Endothelial cell of umbilical vein (primary cell): ENCODE measurements at regions of chr3 and their contacts with region 1.

Region 1: GRCh38 chr3:179653096-179653797 is 407 bp downstream of the USP13 start:
- DNase-seq: peak; percentile 80
- H3K4me3 ChIP-seq: peak overlapping the region; percentile 34 to 86 (median 81)
- H3K27ac ChIP-seq: peak overlapping the region; percentile 80
- H3K4me1 ChIP-seq: peaks cover 13% of the 10 kb centered on the region
- H3K27me3 ChIP-seq: no peaks in the 10 kb centered on the region
- CTCF ChIP-seq: no peak
- POLR2A ChIP-seq: no peak

Region 2: DNA sequence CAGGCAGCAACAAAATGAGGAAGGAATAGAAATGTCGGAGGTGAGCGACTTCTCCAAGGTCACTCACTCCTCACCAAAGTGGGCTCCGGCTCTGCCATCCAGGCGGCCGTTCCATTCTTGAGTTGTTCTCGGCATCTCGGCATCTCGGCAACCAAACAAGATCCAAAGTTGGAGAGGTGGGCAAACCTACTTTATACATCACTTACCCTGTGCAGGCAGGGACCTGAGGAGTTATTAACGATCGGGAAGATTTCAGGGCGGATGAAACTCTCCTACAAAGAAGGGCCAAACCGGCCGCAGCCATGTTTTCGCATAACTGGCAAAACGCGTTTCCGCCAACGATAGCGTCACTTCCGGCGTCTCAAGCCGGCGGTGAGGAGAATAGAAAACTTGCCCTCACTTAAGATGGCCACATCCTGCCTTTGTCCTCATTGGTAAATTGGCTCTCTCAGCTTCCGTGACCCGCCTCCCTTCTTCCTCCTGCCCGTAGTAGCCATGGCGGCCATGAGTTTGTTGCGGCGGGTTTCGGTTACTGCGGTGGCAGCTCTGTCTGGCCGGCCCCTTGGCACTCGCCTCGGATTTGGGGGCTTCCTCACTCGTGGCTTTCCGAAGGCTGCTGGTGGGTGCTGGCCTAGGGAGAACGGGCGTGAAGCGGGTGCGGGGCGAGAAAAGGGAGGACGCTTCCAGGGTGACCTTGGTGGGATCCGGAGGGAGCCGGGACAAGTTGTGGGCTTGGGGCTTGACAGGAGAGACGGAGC is 48.7 kb before region 1 on chr3 and contains the starts of genes MRPL47 and NDUFB5:
- CTCF ChIA-PET with region 1: interaction called, 8 read pairs
- POLR2A ChIA-PET with region 1: no interaction called
- dilution Hi-C with region 1: no loop called
- intact Hi-C with region 1: loop called (anchors 2 kb)
- DNase-seq: peak; percentile 97
- H3K4me3 ChIP-seq: peak within 1 kb of the TSS; percentile 59 to 94 (median 77)
- H3K27ac ChIP-seq: peak within 1 kb of the TSS; percentile 84
- H3K4me1 ChIP-seq: peaks cover 14% of the 10 kb centered on the region
- H3K27me3 ChIP-seq: no peaks in the 10 kb centered on the region
- CTCF ChIP-seq: no peak
- POLR2A ChIP-seq: peak; percentile 94
- total RNA-seq, gene MRPL47: 47.0 and 51.2 TPM in 2 replicates
- total RNA-seq, gene NDUFB5: 68.3 and 74.9 TPM in 2 replicates

Region 3: GRCh38 chr3:179613807-179614206 is 39.4 kb before region 1 on chr3:
- CTCF ChIA-PET with region 1: interaction called, 23 read pairs
- POLR2A ChIA-PET with region 1: no interaction called
- dilution Hi-C with region 1: no loop called
- intact Hi-C with region 1: loop called (anchors 2 kb)
- DNase-seq: peak; percentile 83
- H3K4me3 ChIP-seq: peak overlapping the region in 1 of 3 experiments; percentile 35
- H3K27ac ChIP-seq: peak overlapping the region; percentile 89
- H3K4me1 ChIP-seq: peaks cover 35% of the 10 kb centered on the region
- H3K27me3 ChIP-seq: no peaks in the 10 kb centered on the region
- CTCF ChIP-seq: no peak
- POLR2A ChIP-seq: no peak

Region 4: DNA sequence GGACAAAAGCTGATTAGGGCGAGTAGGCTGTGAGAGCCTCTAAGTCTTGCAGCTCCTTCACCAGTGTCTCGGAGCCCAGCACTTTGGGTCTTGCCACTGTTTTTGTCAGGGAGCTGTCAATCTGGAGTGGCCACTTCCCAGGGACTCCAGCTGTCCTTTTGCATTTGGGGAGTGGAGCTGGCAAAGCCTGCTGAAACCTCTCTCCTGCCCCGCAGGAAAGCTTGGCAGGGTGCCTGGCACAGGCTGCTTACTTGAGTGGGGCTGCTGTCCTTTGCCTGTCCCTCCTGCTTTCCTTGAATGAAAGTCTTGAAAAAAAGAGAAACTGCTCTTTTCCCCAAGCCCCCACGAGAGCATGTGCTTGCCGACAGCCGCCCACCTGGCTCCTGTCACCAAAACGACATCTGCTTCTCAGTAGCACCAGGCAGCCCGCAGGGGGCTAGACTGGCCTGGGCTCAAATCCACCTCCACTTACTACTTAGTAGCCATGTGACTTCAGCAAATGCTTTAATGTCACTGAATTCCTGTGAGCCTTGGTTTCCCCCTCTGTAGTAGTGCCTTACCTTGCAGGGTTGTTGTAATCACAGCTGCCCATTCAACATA is 13.3 kb after region 1 on chr3:
- CTCF ChIA-PET with region 1: interaction called, 18 read pairs
- POLR2A ChIA-PET with region 1: interaction called, 5 read pairs
- dilution Hi-C with region 1: no loop called
- intact Hi-C with region 1: loop called (anchors 1 kb)
- DNase-seq: peak; percentile 27
- H3K4me3 ChIP-seq: no peak overlapping the region
- H3K27ac ChIP-seq: no peak overlapping the region
- H3K4me1 ChIP-seq: peaks cover 14% of the 10 kb centered on the region
- H3K27me3 ChIP-seq: no peaks in the 10 kb centered on the region
- CTCF ChIP-seq: no peak
- POLR2A ChIP-seq: no peak

Region 5: DNA sequence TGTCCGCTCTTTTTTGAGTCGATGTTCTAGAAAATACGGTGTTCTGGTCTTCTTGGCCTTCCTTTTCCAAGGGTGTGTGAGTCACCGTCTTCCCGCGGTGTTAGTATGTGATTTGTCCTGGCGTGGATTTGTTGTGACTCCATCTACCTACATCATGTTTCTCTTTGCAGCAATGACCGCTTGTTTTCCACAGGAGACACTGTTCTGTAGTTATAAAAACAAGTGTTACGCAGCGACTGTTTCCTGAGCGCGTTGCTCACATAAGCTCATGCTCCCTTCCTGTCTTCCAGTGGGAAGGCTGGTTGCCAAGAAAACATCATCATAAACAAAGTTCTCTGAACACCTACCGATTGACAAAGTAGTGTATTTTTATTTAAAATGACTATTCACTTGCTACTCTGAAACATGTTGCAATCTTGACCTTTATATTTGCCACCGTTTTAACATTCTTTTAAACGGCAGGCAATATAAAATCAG is 18.5 kb after region 1 on chr3:
- CTCF ChIA-PET with region 1: interaction called, 18 read pairs
- POLR2A ChIA-PET with region 1: interaction called, 5 read pairs
- dilution Hi-C with region 1: no loop called
- intact Hi-C with region 1: loop called (anchors 1 kb)
- DNase-seq: peak; percentile 100
- H3K4me3 ChIP-seq: peak overlapping the region in 1 of 3 experiments; percentile 37
- H3K27ac ChIP-seq: peak overlapping the region; percentile 94
- H3K4me1 ChIP-seq: peaks cover 15% of the 10 kb centered on the region
- H3K27me3 ChIP-seq: no peaks in the 10 kb centered on the region
- CTCF ChIP-seq: no peak
- POLR2A ChIP-seq: no peak

Region 6: GRCh38 chr3:179768080-179768479 is 114.8 kb after region 1 on chr3:
- CTCF ChIA-PET with region 1: interaction called, 6 read pairs
- POLR2A ChIA-PET with region 1: no interaction called
- dilution Hi-C with region 1: no loop called
- intact Hi-C with region 1: loop called (anchors 2 kb)
- DNase-seq: peak; percentile 43
- H3K4me3 ChIP-seq: no peak overlapping the region
- H3K27ac ChIP-seq: no peak overlapping the region
- H3K4me1 ChIP-seq: peaks cover 16% of the 10 kb centered on the region
- H3K27me3 ChIP-seq: no peaks in the 10 kb centered on the region
- CTCF ChIP-seq: peak; percentile 37 to 38
- POLR2A ChIP-seq: no peak